Activated CD8-positive, alpha-beta T cell treated with anti-CD3 and anti-CD28 coated beads for 36 hours (primary cell): ENCODE measurements at regions of chr2 and their contacts with region 1.

Region 1: DNA sequence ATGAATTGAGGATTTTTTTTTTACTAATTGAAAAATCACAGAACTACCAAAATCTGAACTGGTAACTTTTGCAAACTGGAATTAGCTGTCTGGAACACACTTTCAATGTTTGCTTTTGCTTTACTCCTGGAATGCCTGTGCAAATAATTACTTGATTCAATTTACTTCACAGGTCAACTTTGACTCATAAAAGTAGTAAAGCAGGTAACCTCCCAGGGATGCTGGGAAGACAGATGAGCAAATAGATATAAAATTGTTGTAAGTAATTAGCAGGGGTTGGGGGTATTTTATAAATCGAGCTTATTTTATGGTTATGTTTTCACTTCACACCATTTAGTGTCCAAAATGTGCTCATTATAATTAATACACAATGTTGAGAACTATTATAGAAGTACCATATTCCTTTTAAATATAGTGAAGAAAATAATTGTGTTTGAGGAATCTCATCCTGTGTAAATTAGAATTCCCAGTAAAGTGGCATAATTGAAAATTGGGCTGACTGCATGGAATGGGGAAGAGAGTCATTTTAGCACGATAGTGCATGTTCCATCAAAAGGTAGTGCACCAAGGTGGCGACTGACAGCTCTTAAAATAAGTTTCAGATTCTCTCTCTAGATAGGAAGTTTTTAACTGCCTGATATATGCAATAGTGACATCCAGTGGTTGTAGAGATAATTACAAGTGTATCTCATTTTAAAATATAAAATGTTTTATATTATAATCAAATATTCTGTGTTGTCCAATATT is 398.1 kb upstream of the HNRNPA3 start:
- DNase-seq: peak; percentile 16
- ATAC-seq: peak; percentile 60
- H3K4me3 Mint-ChIP-seq: no peak overlapping the region
- H3K27ac Mint-ChIP-seq: no peak overlapping the region
- H3K4me1 Mint-ChIP-seq: peaks cover 34% of the 10 kb centered on the region
- H3K27me3 Mint-ChIP-seq: no peaks in the 10 kb centered on the region
- CTCF ChIP-seq: peak; percentile 81

Region 2: DNA sequence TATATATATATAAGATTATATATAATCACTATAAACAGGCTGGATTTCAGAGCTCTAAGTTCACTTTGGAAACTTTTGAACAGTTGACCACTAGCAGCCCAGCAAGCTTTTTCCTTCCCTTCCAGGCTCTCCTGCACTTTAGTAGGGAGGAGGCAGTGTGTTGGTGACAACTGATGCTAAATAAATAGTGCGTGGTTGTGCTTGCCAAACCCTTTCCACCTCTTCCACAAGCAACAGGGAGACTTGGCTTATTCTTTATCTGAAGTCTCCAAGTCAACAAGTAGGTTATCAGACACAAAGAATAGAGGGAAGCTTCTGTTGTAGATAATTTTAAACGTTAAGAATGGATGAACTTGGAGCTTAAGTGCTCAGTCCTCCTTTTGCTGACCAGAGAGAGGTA is 10.1 kb before region 1 on chr2:
- CTCF ChIA-PET with region 1: interaction called, 16 read pairs
- POLR2A ChIA-PET with region 1: no interaction called
- intact Hi-C with region 1: no loop called
- DNase-seq: no peak
- ATAC-seq: no peak
- H3K4me3 Mint-ChIP-seq: no peak overlapping the region
- H3K27ac Mint-ChIP-seq: no peak overlapping the region
- H3K4me1 Mint-ChIP-seq: no peaks in the 10 kb centered on the region
- H3K27me3 Mint-ChIP-seq: no peaks in the 10 kb centered on the region
- CTCF ChIP-seq: no peak

Region 3: DNA sequence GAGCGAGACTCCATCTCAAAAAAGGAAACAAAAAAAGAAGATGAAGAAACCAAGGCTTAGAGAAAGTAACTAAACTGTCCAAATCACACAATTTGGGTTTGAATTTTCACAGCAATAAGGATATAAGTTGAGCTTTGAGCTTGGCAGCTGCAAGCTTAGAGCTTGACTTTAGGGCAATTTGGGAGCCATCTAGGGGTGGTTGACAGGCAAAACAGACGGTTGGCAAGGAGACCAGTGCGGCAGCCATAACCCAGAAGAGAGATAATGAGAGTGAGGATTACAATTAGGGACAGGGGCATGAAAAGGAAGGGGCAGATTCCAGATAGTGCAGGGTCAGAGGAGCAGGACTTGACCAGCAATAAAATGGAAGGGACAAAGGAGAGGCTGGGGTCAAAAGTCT is 15.9 kb after region 1 on chr2:
- CTCF ChIA-PET with region 1: interaction called, 15 read pairs
- POLR2A ChIA-PET with region 1: interaction called, 6 read pairs
- intact Hi-C with region 1: no loop called
- DNase-seq: peak; percentile 53
- ATAC-seq: peak; percentile 31
- H3K4me3 Mint-ChIP-seq: no peak overlapping the region
- H3K27ac Mint-ChIP-seq: no peak overlapping the region
- H3K4me1 Mint-ChIP-seq: peaks cover 28% of the 10 kb centered on the region
- H3K27me3 Mint-ChIP-seq: peaks cover 2% of the 10 kb centered on the region
- CTCF ChIP-seq: no peak